ENCODE measurements at regions of chr19 and their contacts with region 1.

Region 1: GRCh38 chr19:33771384-33772101 is 25.1 kb upstream of the KCTD15 start:
- DNase-seq: peak; percentile 63 to 81 (median 78)
- H3K4me3 ChIP-seq: no peak overlapping the region
- H3K27ac ChIP-seq: no peak overlapping the region
- H3K4me1 ChIP-seq: no peaks in the 10 kb centered on the region
- H3K27me3 ChIP-seq: no peaks in the 10 kb centered on the region
- CTCF ChIP-seq: peak; percentile 53 to 74 (median 60)
- EP300 ChIP-seq: no peak
- POLR2A ChIP-seq: no peak

Region 2: GRCh38 chr19:33235269-33235995 is 536.1 kb before region 1 on chr19:
- intact Hi-C with region 1: loop called in 3 of 4 experiments (anchors 5 to 10 kb)
- DNase-seq: peak; percentile 36 to 79 (median 78)
- H3K4me3 ChIP-seq: no peak overlapping the region
- H3K27ac ChIP-seq: no peak overlapping the region
- H3K4me1 ChIP-seq: no peaks in the 10 kb centered on the region
- H3K27me3 ChIP-seq: no peaks in the 10 kb centered on the region
- CTCF ChIP-seq: peak; percentile 48 to 72 (median 69)
- EP300 ChIP-seq: no peak
- POLR2A ChIP-seq: no peak

Region 3: DNA sequence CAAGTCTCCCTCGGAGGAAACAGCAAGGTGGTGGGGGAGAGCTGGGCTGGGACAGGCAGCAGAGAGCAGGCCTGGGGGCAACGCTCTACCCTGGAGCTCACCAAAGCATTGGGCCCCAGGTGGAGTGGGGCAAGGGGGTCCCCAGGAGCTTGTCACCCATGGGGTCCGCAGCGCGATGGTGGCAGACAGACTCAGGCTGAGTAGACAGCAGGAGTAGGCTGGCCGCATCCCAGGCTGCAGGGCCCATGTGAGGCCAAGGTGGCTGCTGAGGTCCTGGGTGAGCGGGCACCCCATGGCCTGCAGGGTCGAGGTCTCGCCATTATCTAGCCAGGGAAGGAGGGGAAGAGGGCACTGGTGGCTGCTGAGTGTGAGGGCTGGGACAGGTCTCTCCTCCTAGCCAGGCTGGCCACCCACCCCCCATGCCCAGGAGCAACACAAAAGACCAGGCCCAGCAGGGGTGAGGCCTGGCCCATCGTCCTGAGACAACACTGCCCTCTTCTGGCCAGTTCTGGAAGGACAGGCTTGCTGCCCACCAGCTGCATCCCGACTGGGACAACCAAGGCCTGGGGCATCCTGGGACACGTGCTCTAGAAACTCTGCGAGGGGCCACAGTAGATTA is 364.9 kb before region 1 on chr19:
- intact Hi-C with region 1: loop called in 1 of 4 experiments (anchors 5 kb)
- DNase-seq: peak; percentile 56 to 80 (median 78)
- H3K4me3 ChIP-seq: no peak overlapping the region
- H3K27ac ChIP-seq: no peak overlapping the region
- H3K4me1 ChIP-seq: no peaks in the 10 kb centered on the region
- H3K27me3 ChIP-seq: no peaks in the 10 kb centered on the region
- CTCF ChIP-seq: peak; percentile 66 to 87 (median 84)
- EP300 ChIP-seq: no peak
- POLR2A ChIP-seq: no peak

Region 4: DNA sequence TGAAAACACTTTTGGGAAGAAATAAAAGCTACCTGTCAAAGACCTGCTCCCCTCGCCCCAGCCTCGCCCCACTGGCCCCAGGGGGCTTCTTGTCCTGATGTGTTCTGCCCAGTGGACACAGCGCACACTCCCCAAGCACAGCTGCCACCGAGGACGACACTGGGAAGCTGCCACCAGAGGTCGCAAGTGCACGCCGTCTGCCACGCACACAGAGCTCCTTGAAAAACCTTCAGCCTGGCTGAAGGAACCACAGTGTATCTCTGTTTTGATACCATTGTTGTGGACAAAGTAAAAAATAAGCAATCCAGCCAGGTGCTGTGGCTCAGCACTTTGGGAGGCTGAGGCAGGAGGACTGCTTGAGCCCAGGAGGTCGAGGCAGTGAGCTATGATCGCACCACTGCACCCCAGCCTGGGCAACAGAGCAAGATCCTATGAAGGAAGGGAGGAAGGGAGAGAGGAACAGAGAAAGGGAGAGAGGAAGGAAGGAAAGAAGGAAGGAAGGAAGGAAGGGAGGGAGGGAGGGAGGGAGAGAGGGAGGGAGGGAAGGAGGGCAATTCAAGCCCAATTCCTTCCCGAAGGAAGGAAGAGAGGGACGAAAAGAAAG is 340.8 kb before region 1 on chr19:
- intact Hi-C with region 1: loop called (anchors 5 to 10 kb)
- DNase-seq: peak in 4 of 5 donors; percentile 43 to 74 (median 54)
- H3K4me3 ChIP-seq: no peak overlapping the region
- H3K27ac ChIP-seq: no peak overlapping the region
- H3K4me1 ChIP-seq: no peaks in the 10 kb centered on the region
- H3K27me3 ChIP-seq: no peaks in the 10 kb centered on the region
- CTCF ChIP-seq: peak in 1 of 3 donors; percentile 17
- EP300 ChIP-seq: no peak
- POLR2A ChIP-seq: no peak

Region 5: GRCh38 chr19:33849551-33850147 is 78.1 kb after region 1 on chr19:
- intact Hi-C with region 1: no loop called
- DNase-seq: no peak
- H3K4me3 ChIP-seq: no peak overlapping the region
- H3K27ac ChIP-seq: no peak overlapping the region
- H3K4me1 ChIP-seq: no peaks in the 10 kb centered on the region
- H3K27me3 ChIP-seq: no peaks in the 10 kb centered on the region
- CTCF ChIP-seq: no peak
- EP300 ChIP-seq: no peak
- POLR2A ChIP-seq: no peak

Region 6: GRCh38 chr19:34096020-34096915 is 324.7 kb after region 1 on chr19:
- intact Hi-C with region 1: loop called (anchors 5 kb)
- DNase-seq: no peak
- H3K4me3 ChIP-seq: no peak overlapping the region
- H3K27ac ChIP-seq: no peak overlapping the region
- H3K4me1 ChIP-seq: peaks cover 2% of the 10 kb centered on the region
- H3K27me3 ChIP-seq: no peaks in the 10 kb centered on the region
- CTCF ChIP-seq: peak in 2 of 3 donors; percentile 50
- EP300 ChIP-seq: no peak
- POLR2A ChIP-seq: no peak